Right lobe of liver (tissue), 6 donors: ENCODE measurements at regions of chr2 and their contacts with region 1.

Region 1: GRCh38 chr2:96856776-96857673 is 791 bp downstream of the ANKRD39 start:
- DNase-seq: no peak
- ATAC-seq: peak; percentile 6 to 21 (median 19)
- H3K4me3 ChIP-seq: peak overlapping the region; percentile 66 to 87 (median 75)
- H3K27ac ChIP-seq: peak overlapping the region; percentile 46 to 75 (median 66)
- H3K4me1 ChIP-seq: peaks cover 0 to 52% (median 18%) of the 10 kb centered on the region in 4 donors
- H3K27me3 ChIP-seq: no peaks in the 10 kb centered on the region
- CTCF ChIP-seq: no peak
- POLR2A ChIP-seq: no peak

Region 2: GRCh38 chr2:96816128-96816835 is 40.7 kb before region 1 on chr2 and contains the start of gene CNNM3:
- intact Hi-C with region 1: loop called (anchors 5 to 10 kb)
- DNase-seq: peak; percentile 99
- ATAC-seq: peak; percentile 80 to 92 (median 84)
- H3K4me3 ChIP-seq: peak within 1 kb of the TSS; percentile 76 to 93 (median 91)
- H3K27ac ChIP-seq: peak within 1 kb of the TSS; percentile 88 to 94 (median 93)
- H3K4me1 ChIP-seq: peaks cover 0 to 43% (median 16%) of the 10 kb centered on the region in 4 donors
- H3K27me3 ChIP-seq: no peaks in the 10 kb centered on the region
- CTCF ChIP-seq: peak; percentile 67 to 77 (median 69)
- POLR2A ChIP-seq: peak; percentile 71
- total RNA-seq, gene CNNM3: 11.5 to 37.6 (median 21.6) TPM

Region 3: DNA sequence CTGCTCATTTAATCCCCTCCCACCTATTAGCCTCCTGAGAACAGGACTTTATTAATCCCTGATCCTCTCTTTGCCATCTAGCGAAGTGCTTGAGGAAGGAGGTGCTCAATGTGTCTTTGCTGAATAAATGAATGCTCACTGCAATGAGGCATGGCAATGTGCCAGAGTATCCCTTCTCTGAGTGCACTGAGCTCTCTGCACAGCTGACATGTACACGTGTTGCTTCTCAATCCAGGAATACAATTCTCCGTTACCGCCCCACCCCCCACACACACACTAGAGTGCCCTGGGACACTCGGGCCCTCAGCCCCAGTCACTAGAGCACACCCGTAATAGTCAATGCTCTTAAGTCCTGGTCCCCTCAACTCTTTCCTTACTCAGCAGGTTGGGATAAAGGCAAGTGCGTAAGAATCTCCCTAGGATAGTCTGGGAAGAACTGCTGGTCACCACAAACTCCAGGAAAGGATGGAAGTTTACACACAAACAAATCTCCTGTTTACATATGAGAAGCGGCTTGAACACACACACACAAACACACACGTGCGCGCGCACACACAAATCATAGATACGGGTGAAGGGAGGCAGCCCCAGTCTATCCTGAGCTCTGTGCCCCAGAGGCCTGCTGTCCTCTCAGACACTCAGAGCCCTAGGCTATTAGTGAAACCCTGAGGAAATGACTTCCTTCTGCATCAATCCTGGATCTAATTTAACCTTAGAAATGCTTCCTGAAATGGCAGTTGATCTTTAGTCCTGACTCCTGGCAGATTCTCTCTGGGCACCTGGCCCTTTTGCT is 88.2 kb after region 1 on chr2:
- intact Hi-C with region 1: loop called (anchors 5 kb)
- DNase-seq: no peak
- ATAC-seq: no peak
- H3K4me3 ChIP-seq: no peak overlapping the region
- H3K27ac ChIP-seq: no peak overlapping the region
- H3K4me1 ChIP-seq: no peaks in the 10 kb centered on the region
- H3K27me3 ChIP-seq: no peaks in the 10 kb centered on the region
- CTCF ChIP-seq: no peak
- POLR2A ChIP-seq: no peak

Region 4: DNA sequence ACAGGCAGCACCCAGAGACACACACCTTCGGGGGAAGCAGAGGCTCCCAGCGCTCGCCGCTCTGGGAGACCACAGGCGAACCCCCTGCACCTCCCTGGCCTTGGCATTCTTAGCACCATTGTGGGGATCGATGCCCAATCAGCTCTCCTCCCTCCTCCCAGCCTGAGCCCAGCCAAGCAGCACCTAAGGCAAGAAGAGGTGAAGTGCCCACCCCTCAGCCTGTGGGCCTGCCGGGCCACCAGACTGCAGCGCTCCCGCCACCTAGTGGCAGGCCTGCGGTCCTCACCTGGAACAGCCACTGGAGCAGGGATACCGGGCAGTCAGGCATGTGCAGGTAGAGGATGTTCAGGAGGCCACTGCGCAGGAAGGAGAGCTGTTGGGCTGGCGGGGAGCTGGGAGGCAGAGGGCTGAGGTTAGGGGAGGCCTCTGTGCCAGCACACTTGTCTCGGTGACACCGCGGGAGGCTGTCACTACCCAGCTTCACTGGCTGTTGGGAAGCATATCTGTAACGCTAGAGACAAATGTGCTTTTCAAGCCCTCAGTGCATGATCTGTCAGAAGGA is 94.1 kb after region 1 on chr2:
- intact Hi-C with region 1: loop called (anchors 5 kb)
- DNase-seq: peak; percentile 78 to 81 (median 79)
- ATAC-seq: peak; percentile 91 to 97 (median 94)
- H3K4me3 ChIP-seq: no peak overlapping the region
- H3K27ac ChIP-seq: no peak overlapping the region
- H3K4me1 ChIP-seq: no peaks in the 10 kb centered on the region
- H3K27me3 ChIP-seq: no peaks in the 10 kb centered on the region
- CTCF ChIP-seq: peak; percentile 88 to 96 (median 89)
- POLR2A ChIP-seq: no peak